ENCODE measurements at regions of chr2 and their contacts with region 1.

Region 1: DNA sequence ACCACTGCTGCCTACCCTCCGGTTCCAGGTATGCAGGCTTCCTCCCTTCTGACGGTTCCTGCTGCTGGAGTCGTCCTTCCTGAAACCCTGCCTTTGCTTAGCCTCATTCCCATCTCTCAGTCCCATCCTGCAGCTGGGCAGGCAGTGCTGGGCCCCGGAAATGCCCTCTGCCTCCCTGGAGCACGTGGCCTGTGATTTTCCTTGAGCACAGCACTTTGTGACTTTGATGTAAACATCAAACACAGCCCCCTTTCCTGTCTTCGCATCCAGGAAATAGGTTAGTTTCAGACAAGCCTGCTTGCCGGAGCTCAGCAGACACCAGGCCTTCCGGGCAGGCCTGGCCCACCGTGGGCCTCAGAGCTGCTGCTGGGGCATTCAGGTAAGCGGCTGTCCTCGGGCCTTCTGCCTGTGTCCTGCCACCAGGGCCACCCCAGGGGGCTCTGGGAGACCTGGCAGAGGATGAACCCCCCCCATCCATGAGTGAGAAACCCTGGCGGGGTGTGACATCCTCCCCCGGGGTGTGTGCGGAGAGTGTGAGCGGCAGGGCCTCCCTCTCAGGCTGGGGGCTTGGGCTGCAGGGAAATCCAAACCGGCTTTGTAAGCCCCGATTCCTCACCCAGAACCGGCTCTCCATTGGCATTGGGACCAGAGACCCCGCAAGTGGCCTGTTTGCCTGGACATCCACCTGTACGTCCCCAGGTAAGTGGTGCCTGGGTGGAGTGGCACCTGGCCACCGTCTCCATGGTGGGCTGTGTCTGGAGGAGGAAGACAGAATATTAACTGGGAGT is at the start of gene ZAP70:
- DNase-seq: peak in 1 of 2 donors; percentile 10
- H3K4me3 ChIP-seq: peak within 1 kb of the TSS in 2 of 3 donors; percentile 13 to 28
- H3K27ac ChIP-seq: no peak within 1 kb of the TSS
- H3K4me1 ChIP-seq: no peaks in the 10 kb centered on the region
- H3K27me3 ChIP-seq: no peaks in the 10 kb centered on the region
- CTCF ChIP-seq: no peak
- POLR2A ChIP-seq: no peak
- total RNA-seq, gene ZAP70: 4.0 to 7.3 (median 4.9) TPM

Region 2: DNA sequence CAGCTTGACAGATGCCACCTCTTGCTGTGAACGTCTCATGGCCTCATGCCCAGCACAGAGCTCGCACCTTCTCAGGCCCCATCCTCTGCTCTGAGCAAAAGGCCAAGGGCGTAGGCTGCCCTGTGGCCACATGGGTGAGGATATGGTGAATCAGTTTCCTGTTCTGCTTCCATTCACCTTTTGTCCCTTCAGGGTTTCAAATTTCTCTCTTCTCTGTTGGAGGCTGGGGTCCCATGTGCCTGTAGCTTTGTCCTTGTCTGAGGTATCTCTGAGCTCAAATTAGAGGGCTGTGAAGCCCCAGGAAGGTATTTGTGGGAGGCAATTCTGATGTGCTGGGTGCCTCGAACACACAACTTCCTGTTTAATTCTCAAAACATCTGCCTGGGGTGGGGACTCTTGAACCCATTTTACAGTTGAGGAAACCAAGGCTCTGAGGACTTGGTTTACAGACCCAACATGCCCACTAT is 28.9 kb after region 1 on chr2:
- intact Hi-C with region 1: loop called (anchors 2 kb)
- DNase-seq: no peak
- H3K4me3 ChIP-seq: no peak overlapping the region
- H3K27ac ChIP-seq: no peak overlapping the region
- H3K4me1 ChIP-seq: no peaks in the 10 kb centered on the region
- H3K27me3 ChIP-seq: peaks cover 0 to 8% of the 10 kb centered on the region in 2 donors
- CTCF ChIP-seq: no peak
- POLR2A ChIP-seq: no peak

Measured in breast epithelium (tissue), 4 donors.